ENCODE measurements at regions of chr2 and their contacts with region 1.

Region 1: DNA sequence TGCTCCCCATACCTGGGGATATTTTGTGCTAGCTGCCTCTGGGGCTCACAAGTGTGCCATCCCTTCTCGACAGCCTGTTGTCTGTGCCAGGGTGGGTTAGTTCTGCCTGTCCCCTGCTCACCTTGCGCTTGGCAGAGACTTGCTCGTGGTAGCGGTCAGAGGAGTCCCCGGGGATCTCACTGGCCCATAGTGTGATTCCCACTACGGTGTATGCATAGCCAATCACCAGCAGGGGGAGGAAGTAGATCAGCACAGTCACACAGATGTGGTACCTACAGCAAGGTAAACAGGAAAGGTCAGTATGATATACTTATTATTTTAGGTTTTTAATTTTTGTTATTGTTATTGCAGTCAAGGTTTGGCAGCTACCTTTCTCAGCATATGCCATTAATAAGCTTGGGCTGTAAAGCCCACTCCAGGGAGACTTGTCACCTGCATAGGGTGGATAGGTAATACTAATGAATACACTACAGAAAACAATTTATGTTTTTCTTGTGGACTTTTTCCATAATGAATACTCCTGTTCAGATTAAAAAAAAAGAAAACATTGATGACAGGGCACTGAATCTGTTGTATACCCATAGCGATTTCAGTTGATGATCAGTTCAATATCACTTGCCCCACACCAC is 95.2 kb downstream of the POLE4 start:
- DNase-seq: peak; percentile 36
- ATAC-seq: peak; percentile 100
- H3K4me3 ChIP-seq: no peak overlapping the region
- H3K27ac ChIP-seq: no peak overlapping the region
- H3K4me1 ChIP-seq: no peaks in the 10 kb centered on the region
- H3K27me3 ChIP-seq: 0 out of 2 replicates have a peak, but pooled peaks cover 7% of the 10 kb centered on the region
- CTCF ChIP-seq: peak; percentile 32 to 86 (median 69); a peak in 5 of 6 replicates
- POLR2A ChIP-seq: no peak
- RAD21 ChIP-seq: peak; percentile 64

Region 2: DNA sequence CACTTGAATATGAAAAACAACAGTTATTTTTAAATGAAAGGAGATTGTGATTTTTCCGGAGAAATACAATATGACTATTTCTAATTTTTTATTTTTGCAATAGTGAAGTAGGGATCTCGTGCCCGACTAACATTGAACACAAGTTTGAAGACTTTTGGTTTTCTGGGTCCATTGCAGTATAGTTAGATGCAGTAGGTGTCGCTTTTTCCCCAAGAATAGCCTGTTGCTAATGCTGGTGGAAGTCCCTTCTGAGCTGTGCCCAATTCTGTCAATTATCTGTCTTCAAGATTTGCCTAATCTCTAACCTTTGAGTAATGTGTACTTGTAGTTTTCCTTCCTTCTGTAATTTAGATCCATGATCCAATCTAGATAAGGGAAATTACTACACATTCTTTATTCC is 363.0 kb before region 1 on chr2:
- CTCF ChIA-PET with region 1: no interaction called
- POLR2A ChIA-PET with region 1: no interaction called
- RAD21 ChIA-PET with region 1: no interaction called
- intact Hi-C with region 1: loop called (anchors 10 kb)
- DNase-seq: peak; percentile 49
- ATAC-seq: peak; percentile 87
- H3K4me3 ChIP-seq: no peak overlapping the region
- H3K27ac ChIP-seq: no peak overlapping the region
- H3K4me1 ChIP-seq: no peaks in the 10 kb centered on the region
- H3K27me3 ChIP-seq: no peaks in the 10 kb centered on the region
- CTCF ChIP-seq: peak; percentile 71 to 87 (median 76); a peak in 5 of 6 replicates
- POLR2A ChIP-seq: no peak
- RAD21 ChIP-seq: peak; percentile 94

Region 3: GRCh38 chr2:74935975-74936391 is 117.6 kb before region 1 on chr2:
- CTCF ChIA-PET with region 1: no interaction called
- POLR2A ChIA-PET with region 1: no interaction called
- RAD21 ChIA-PET with region 1: no interaction called
- intact Hi-C with region 1: loop called (anchors 10 kb)
- DNase-seq: no peak
- ATAC-seq: no peak
- H3K4me3 ChIP-seq: no peak overlapping the region
- H3K27ac ChIP-seq: no peak overlapping the region
- H3K4me1 ChIP-seq: no peaks in the 10 kb centered on the region
- H3K27me3 ChIP-seq: 0 out of 2 replicates have a peak, but pooled peaks cover 18% of the 10 kb centered on the region
- CTCF ChIP-seq: no peak
- POLR2A ChIP-seq: no peak
- RAD21 ChIP-seq: no peak